ENCODE measurements at regions of chr19 and their contacts with region 1.

Region 1: GRCh38 chr19:38877781-38878574 is at the start of gene RINL:
- DNase-seq: peak; percentile 78
- H3K4me3 Mint-ChIP-seq: peak within 1 kb of the TSS; percentile 87
- H3K27ac Mint-ChIP-seq: peak within 1 kb of the TSS; percentile 98
- H3K4me1 Mint-ChIP-seq: peaks cover 43% of the 10 kb centered on the region
- H3K27me3 Mint-ChIP-seq: no peaks in the 10 kb centered on the region
- total RNA-seq, gene RINL: 79.9 to 82.2 TPM

Region 2: GRCh38 chr19:38838573-38839269 is 39.3 kb before region 1 on chr19:
- CTCF ChIA-PET with region 1: interaction called, 4 read pairs
- POLR2A ChIA-PET with region 1: interaction called, 10 read pairs
- DNase-seq: peak; percentile 32
- H3K4me3 Mint-ChIP-seq: no peak overlapping the region
- H3K27ac Mint-ChIP-seq: peak overlapping the region; percentile 61
- H3K4me1 Mint-ChIP-seq: peaks cover 51% of the 10 kb centered on the region
- H3K27me3 Mint-ChIP-seq: no peaks in the 10 kb centered on the region

Region 3: DNA sequence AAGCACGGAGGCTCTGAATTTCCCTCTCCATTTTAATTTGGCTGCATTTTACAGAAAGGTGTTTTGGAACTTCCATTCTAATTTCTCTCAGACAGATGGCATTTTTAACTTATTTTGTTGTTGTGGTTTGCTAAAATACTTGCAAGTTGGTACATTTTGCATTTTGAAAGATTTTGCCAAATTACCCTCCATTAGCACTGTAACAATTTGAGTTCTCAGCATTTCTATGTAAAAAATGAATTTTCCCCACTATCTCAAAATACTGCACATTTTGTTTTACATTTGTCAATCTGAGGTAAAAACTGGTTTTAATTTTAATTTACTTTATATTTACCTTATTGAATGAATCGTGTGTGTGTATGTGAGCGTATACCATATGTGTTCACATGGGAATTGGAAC is 21.2 kb before region 1 on chr19:
- CTCF ChIA-PET with region 1: interaction called, 6 read pairs
- POLR2A ChIA-PET with region 1: interaction called, 37 read pairs
- DNase-seq: no peak
- H3K4me3 Mint-ChIP-seq: no peak overlapping the region
- H3K27ac Mint-ChIP-seq: peak overlapping the region; percentile 83
- H3K4me1 Mint-ChIP-seq: peaks cover 42% of the 10 kb centered on the region
- H3K27me3 Mint-ChIP-seq: no peaks in the 10 kb centered on the region

Region 4: GRCh38 chr19:38891771-38892170 is 13.8 kb after region 1 on chr19:
- CTCF ChIA-PET with region 1: interaction called, 53 read pairs
- POLR2A ChIA-PET with region 1: interaction called, 16 read pairs
- DNase-seq: no peak
- H3K4me3 Mint-ChIP-seq: no peak overlapping the region
- H3K27ac Mint-ChIP-seq: no peak overlapping the region
- H3K4me1 Mint-ChIP-seq: peaks cover 3% of the 10 kb centered on the region
- H3K27me3 Mint-ChIP-seq: no peaks in the 10 kb centered on the region